ENCODE measurements at regions of chr22 and their contacts with region 1.

Region 1: GRCh38 chr22:29587938-29588699 is 7.2 kb upstream of the NIPSNAP1 start:
- DNase-seq: peak; percentile 26
- H3K4me3 ChIP-seq: no peak overlapping the region
- H3K27ac ChIP-seq: no peak overlapping the region
- H3K4me1 ChIP-seq: no peaks in the 10 kb centered on the region
- H3K27me3 ChIP-seq: no peaks in the 10 kb centered on the region
- CTCF ChIP-seq: no peak

Region 2: GRCh38 chr22:29470159-29470855 is 117.8 kb before region 1 on chr22:
- CTCF ChIA-PET with region 1: interaction called, 18 read pairs
- POLR2A ChIA-PET with region 1: no interaction called
- intact Hi-C with region 1: no loop called
- DNase-seq: peak; percentile 65
- H3K4me3 ChIP-seq: no peak overlapping the region
- H3K27ac ChIP-seq: no peak overlapping the region
- H3K4me1 ChIP-seq: no peaks in the 10 kb centered on the region
- H3K27me3 ChIP-seq: no peaks in the 10 kb centered on the region
- CTCF ChIP-seq: peak; percentile 92

Region 3: DNA sequence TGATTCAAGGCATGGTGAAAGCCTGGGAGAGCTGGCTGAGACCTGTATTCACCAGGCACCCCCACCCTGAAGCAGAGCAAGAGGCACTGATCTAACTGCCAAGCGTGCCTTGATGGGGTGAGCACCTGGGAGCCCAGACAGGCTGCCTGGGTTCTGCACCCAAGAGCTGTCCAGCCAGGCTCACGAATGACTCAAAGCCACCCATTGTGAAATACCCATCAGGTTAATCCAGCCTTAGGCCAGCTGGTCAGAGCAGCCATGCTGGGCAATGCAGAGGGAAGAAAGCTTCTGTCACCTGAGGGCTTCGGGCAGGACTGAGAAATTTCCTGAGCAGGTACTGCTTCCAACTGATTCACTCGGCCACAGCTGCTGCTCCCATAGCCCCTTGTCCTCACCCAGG is 56.7 kb before region 1 on chr22:
- CTCF ChIA-PET with region 1: no interaction called
- POLR2A ChIA-PET with region 1: interaction called, 32 read pairs
- intact Hi-C with region 1: no loop called
- DNase-seq: no peak
- H3K4me3 ChIP-seq: no peak overlapping the region
- H3K27ac ChIP-seq: no peak overlapping the region
- H3K4me1 ChIP-seq: no peaks in the 10 kb centered on the region
- H3K27me3 ChIP-seq: no peaks in the 10 kb centered on the region
- CTCF ChIP-seq: no peak

Region 4: GRCh38 chr22:29635734-29636357 is 47.7 kb after region 1 on chr22:
- CTCF ChIA-PET with region 1: no interaction called
- POLR2A ChIA-PET with region 1: no interaction called
- intact Hi-C with region 1: no loop called
- DNase-seq: peak; percentile 76
- H3K4me3 ChIP-seq: no peak overlapping the region
- H3K27ac ChIP-seq: no peak overlapping the region
- H3K4me1 ChIP-seq: peaks cover 17% of the 10 kb centered on the region
- H3K27me3 ChIP-seq: peaks cover 9% of the 10 kb centered on the region
- CTCF ChIP-seq: peak; percentile 78

Region 5: DNA sequence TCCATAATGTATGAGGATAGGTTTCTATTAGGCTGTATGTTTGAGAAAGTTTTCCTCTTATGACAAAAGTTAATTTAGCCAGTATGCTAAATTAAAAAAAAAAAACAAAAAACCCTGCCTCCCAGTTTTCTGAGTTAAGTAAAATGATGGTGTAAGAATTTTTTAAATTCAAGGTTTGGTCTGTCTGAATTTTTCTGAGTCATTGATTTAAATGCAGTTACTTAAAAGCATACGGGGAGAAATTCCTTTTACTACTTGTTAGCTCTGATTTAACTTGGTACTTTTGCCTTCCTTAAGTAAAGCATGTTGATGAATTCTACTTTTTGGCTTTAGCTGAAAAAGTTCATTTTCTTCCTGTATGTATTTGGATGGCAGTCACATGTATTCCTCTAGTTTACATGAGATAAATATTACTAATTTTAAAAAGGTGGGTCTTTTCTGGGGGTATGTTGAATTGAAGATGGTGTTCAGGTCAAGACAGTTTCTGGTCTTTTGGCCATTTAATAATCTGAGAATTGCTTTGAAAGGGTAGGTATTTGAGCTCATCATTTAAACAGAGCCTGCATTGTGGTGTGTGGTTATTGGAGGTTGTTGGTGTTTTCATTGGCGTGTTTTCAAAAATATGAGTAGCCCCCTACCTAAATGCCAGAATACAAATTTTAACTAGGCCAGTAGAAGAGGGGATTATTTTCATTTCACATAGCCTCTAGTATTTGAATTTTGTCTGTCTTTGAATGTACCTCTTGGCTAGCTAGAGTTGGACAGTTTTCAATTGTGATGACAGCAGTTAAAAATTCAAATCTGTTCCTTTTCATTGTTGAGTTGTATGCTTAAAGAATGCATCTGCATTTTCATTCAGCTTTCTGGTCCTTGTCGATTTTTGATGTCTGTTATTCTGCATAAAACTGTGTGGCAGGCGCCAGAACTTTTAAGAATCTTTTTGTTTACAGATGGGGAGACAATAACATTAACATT is 359.6 kb after region 1 on chr22:
- CTCF ChIA-PET with region 1: no interaction called
- POLR2A ChIA-PET with region 1: no interaction called
- intact Hi-C with region 1: no loop called
- DNase-seq: no peak
- H3K4me3 ChIP-seq: no peak overlapping the region
- H3K27ac ChIP-seq: no peak overlapping the region
- H3K4me1 ChIP-seq: peaks cover 21% of the 10 kb centered on the region
- H3K27me3 ChIP-seq: no peaks in the 10 kb centered on the region
- CTCF ChIP-seq: no peak

Region 6: DNA sequence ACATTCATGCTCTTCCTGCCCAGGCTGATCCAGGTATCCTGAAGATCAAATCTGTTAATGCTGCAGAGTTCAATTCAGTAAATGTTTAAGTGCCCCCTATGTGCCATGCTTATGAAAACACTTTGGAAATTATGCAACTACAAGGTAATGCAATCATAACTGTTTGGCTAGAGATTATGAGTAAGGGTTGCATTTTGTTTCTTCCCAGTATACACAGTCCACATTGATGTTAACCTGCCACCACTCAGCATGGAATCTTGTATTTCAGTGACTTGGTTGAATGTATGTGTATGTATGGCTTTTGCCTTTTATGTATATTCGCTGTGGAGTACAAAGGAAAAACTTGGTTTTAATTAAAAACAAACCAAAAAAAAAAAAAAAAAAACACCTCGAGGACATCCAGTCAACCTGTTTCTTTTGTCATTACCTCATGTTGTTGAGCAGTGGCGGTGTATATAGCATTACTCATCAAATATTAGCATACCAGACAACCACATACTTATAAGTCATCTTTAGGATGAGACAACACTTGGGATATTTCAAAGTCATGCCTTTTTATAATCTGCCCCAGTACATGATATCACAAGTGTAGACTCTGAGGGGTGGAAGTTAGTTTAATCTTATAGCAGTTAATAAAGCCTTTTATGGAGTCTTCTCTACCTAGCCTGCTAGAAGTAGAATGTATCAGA is 406.1 kb after region 1 on chr22:
- CTCF ChIA-PET with region 1: no interaction called
- POLR2A ChIA-PET with region 1: no interaction called
- intact Hi-C with region 1: no loop called
- DNase-seq: peak; percentile 22
- H3K4me3 ChIP-seq: no peak overlapping the region
- H3K27ac ChIP-seq: no peak overlapping the region
- H3K4me1 ChIP-seq: no peaks in the 10 kb centered on the region
- H3K27me3 ChIP-seq: no peaks in the 10 kb centered on the region
- CTCF ChIP-seq: peak; percentile 43